ENCODE measurements at regions of chr16 and their contacts with region 1.

Region 1: GRCh38 chr16:82229796-82230619 is 60.0 kb upstream of the MPHOSPH6 start:
- DNase-seq: peak; percentile 70
- ATAC-seq: peak; percentile 94
- H3K4me3 ChIP-seq: no peak overlapping the region
- H3K27ac ChIP-seq: no peak overlapping the region
- H3K4me1 ChIP-seq: peaks cover 2% of the 10 kb centered on the region; the same call in 1 of the 2 replicates
- H3K27me3 ChIP-seq: peaks cover 4% of the 10 kb centered on the region; the same call in 1 of the 2 replicates
- CTCF ChIP-seq: peak; percentile 90
- POLR2A ChIP-seq: no peak
- RAD21 ChIP-seq: peak; percentile 91

Region 2: DNA sequence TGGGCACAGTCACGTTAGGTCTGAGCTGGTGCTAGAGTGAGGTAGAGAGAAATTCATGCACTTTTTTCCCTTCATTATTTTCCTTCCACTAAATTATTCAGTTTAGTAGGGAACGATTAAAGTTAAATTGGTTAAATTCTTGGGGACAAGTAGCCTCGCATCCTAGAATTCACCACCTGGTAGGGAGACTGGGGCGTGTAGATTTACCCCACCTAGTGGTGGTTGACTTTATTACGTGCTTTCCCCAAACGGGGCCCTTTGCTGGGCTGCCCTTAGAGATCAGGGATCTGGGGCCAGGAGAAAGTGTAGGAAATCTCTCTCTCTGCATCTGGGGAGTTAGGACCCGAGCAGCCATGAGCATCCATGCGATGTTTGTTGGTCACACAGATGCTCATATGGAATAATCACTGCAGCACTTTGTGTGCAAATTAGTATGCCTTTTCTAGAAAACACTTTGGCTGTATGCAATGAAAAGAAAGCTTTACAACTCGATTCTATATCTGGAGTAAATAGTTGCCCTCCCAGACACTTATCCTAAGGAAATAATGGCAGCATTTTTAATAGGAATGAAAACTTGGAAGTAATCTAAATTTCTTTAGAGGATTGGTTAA is 343.9 kb before region 1 on chr16:
- CTCF ChIA-PET with region 1: no interaction called
- POLR2A ChIA-PET with region 1: no interaction called
- dilution Hi-C with region 1: no loop called
- in situ Hi-C with region 1: no loop called
- intact Hi-C with region 1: loop called (anchors 1 kb)
- DNase-seq: peak; percentile 16
- ATAC-seq: peak; percentile 85
- H3K4me3 ChIP-seq: no peak overlapping the region
- H3K27ac ChIP-seq: no peak overlapping the region
- H3K4me1 ChIP-seq: no peaks in the 10 kb centered on the region; the same call in 1 of the 2 replicates
- H3K27me3 ChIP-seq: peaks cover 10% of the 10 kb centered on the region
- CTCF ChIP-seq: peak; percentile 52
- POLR2A ChIP-seq: no peak
- RAD21 ChIP-seq: peak; percentile 13; the same call in 1 of the 2 replicates

Region 3: GRCh38 chr16:81940781-81941560 is 289.0 kb before region 1 on chr16:
- CTCF ChIA-PET with region 1: interaction called, 11 read pairs
- POLR2A ChIA-PET with region 1: no interaction called
- dilution Hi-C with region 1: no loop called
- in situ Hi-C with region 1: loop called (anchors 5 kb)
- intact Hi-C with region 1: loop called (anchors 1 kb)
- DNase-seq: peak; percentile 64
- ATAC-seq: peak; percentile 61
- H3K4me3 ChIP-seq: no peak overlapping the region
- H3K27ac ChIP-seq: no peak overlapping the region
- H3K4me1 ChIP-seq: peaks cover 3% of the 10 kb centered on the region
- H3K27me3 ChIP-seq: peaks cover 13% of the 10 kb centered on the region
- CTCF ChIP-seq: peak; percentile 60
- POLR2A ChIP-seq: no peak
- RAD21 ChIP-seq: peak; percentile 65

Region 4: GRCh38 chr16:82016964-82017363 is 213.0 kb before region 1 on chr16:
- CTCF ChIA-PET with region 1: no interaction called
- POLR2A ChIA-PET with region 1: interaction called, 12 read pairs
- dilution Hi-C with region 1: no loop called
- in situ Hi-C with region 1: no loop called
- intact Hi-C with region 1: no loop called
- DNase-seq: no peak
- ATAC-seq: no peak
- H3K4me3 ChIP-seq: no peak overlapping the region
- H3K27ac ChIP-seq: no peak overlapping the region
- H3K4me1 ChIP-seq: no peaks in the 10 kb centered on the region
- H3K27me3 ChIP-seq: peaks cover 11% of the 10 kb centered on the region
- CTCF ChIP-seq: no peak
- POLR2A ChIP-seq: no peak
- RAD21 ChIP-seq: no peak

Region 5: GRCh38 chr16:82031116-82032084 is 198.6 kb before region 1 on chr16:
- CTCF ChIA-PET with region 1: interaction called, 10 read pairs
- POLR2A ChIA-PET with region 1: no interaction called
- dilution Hi-C with region 1: no loop called
- in situ Hi-C with region 1: loop called (anchors 5 kb)
- intact Hi-C with region 1: loop called (anchors 1 kb)
- DNase-seq: peak; percentile 72
- ATAC-seq: peak; percentile 82
- H3K4me3 ChIP-seq: no peak overlapping the region
- H3K27ac ChIP-seq: peak overlapping the region; percentile 66
- H3K4me1 ChIP-seq: peaks cover 8% of the 10 kb centered on the region
- H3K27me3 ChIP-seq: peaks cover 5% of the 10 kb centered on the region; the same call in 1 of the 2 replicates
- CTCF ChIP-seq: peak; percentile 62
- POLR2A ChIP-seq: no peak
- RAD21 ChIP-seq: peak; percentile 68

Region 6: DNA sequence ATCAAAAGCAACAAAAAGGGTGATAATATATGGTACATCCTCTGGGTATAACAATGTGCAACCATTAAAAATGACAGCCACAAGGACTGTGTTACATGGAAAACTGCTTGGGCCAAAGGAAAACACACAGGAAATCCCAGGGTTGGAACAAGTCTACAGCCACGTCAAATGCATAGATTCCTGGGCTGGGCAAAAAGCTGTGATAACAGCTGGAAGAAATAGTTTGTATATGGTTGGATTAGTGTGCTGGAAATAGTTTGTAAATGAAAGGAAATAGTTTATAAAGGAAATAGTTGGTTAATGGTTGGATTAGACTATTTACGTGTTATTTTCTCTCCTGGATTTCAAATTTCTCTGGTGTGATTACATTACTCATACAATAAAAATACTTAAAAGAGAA is 192.3 kb before region 1 on chr16:
- CTCF ChIA-PET with region 1: interaction called, 10 read pairs
- POLR2A ChIA-PET with region 1: interaction called, 3 read pairs
- dilution Hi-C with region 1: no loop called
- in situ Hi-C with region 1: loop called (anchors 5 kb)
- intact Hi-C with region 1: no loop called
- DNase-seq: peak; percentile 53
- ATAC-seq: peak; percentile 70
- H3K4me3 ChIP-seq: no peak overlapping the region
- H3K27ac ChIP-seq: no peak overlapping the region
- H3K4me1 ChIP-seq: peaks cover 13% of the 10 kb centered on the region
- H3K27me3 ChIP-seq: no peaks in the 10 kb centered on the region
- CTCF ChIP-seq: no peak
- POLR2A ChIP-seq: no peak
- RAD21 ChIP-seq: no peak